PC-3 (cell line): ENCODE measurements at regions of chr6 and their contacts with region 1.

Region 1: DNA sequence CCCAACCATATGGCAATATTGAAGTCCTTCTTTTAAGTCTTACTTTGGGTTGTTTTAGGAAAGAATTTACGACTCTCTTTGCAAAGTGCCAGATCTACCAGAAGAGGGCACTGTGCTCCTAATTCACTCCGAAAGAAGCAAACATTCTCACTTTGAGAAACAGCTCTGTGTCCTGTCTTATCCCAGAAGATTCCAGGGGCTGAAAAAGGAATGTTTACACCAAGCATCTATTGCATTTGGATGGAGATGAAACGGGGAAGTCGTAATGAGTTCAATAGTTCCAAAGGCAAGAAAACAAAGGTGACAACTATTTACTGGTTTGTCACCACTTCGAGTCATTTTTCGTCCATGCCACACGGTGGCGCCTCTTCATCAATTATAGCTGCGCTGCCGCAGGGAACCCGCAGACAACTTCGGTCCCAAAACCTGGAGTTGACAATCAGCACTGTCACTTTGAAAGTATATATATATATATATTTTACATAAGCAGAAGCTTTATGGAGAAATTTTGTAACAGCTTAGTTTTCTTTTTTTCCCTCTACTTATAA is 121.6 kb downstream of the MOXD1 start:
- DNase-seq: peak; percentile 76
- ATAC-seq: peak; percentile 64
- H3K4me3 ChIP-seq: peak overlapping the region; percentile 68
- H3K27ac ChIP-seq: no peak overlapping the region
- H3K4me1 ChIP-seq: no peaks in the 10 kb centered on the region
- H3K27me3 ChIP-seq: no peaks in the 10 kb centered on the region
- CTCF ChIP-seq: peak; percentile 96

Region 2: GRCh38 chr6:131924881-131925474 is 354.7 kb before region 1 on chr6:
- CTCF ChIA-PET with region 1: interaction called, 3 read pairs
- POLR2A ChIA-PET with region 1: no interaction called
- intact Hi-C with region 1: loop called (anchors 5 kb)
- DNase-seq: peak; percentile 63
- ATAC-seq: peak; percentile 48
- H3K4me3 ChIP-seq: no peak overlapping the region
- H3K27ac ChIP-seq: no peak overlapping the region
- H3K4me1 ChIP-seq: peaks cover 4% of the 10 kb centered on the region; the same call in 1 of the 2 replicates
- H3K27me3 ChIP-seq: no peaks in the 10 kb centered on the region
- CTCF ChIP-seq: peak; percentile 74

Region 3: DNA sequence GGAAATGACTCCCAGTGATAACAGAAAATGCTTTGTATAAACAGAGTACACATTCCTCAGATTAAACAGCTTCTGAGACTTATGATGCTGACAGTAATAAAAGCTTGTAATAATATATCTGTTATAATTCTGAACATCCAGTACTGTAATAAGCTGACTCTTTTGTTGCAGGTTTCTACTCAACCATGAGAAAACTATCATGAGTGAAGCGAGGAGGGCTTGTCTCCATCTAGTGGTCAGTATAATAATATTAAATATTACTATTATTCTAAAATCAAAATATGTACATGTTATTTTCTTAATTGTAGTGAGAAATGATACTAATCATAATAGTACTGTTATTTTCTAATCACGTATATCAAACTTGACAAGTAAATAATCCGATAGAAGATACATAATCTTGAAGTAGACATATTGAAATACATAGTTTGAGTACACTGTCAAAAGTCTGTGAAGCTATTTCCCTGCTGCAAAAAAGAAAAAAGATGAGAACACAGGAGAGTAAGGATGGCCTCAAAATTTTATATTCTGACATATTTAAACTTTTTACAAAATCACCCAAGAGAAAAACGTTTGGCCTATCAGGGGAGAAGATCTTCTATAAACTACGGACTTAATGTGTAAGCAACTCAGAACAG is 61.5 kb before region 1 on chr6:
- CTCF ChIA-PET with region 1: no interaction called
- POLR2A ChIA-PET with region 1: no interaction called
- intact Hi-C with region 1: no loop called
- DNase-seq: peak; percentile 42
- ATAC-seq: no peak; the same call in 1 of the 2 replicates
- H3K4me3 ChIP-seq: no peak overlapping the region
- H3K27ac ChIP-seq: no peak overlapping the region
- H3K4me1 ChIP-seq: no peaks in the 10 kb centered on the region
- H3K27me3 ChIP-seq: no peaks in the 10 kb centered on the region
- CTCF ChIP-seq: peak; percentile 36

Region 4: GRCh38 chr6:132300323-132300949 is 20.8 kb after region 1 on chr6:
- CTCF ChIA-PET with region 1: interaction called, 19 read pairs
- POLR2A ChIA-PET with region 1: no interaction called
- intact Hi-C with region 1: loop called (anchors 1 kb)
- DNase-seq: peak; percentile 66
- ATAC-seq: peak; percentile 87
- H3K4me3 ChIP-seq: no peak overlapping the region
- H3K27ac ChIP-seq: no peak overlapping the region
- H3K4me1 ChIP-seq: no peaks in the 10 kb centered on the region
- H3K27me3 ChIP-seq: no peaks in the 10 kb centered on the region
- CTCF ChIP-seq: peak; percentile 70

Region 5: GRCh38 chr6:132391391-132392271 is 112.0 kb after region 1 on chr6:
- CTCF ChIA-PET with region 1: interaction called, 4 read pairs
- POLR2A ChIA-PET with region 1: no interaction called
- intact Hi-C with region 1: loop called (anchors 5 kb)
- DNase-seq: peak; percentile 26
- ATAC-seq: peak; percentile 51
- H3K4me3 ChIP-seq: no peak overlapping the region
- H3K27ac ChIP-seq: no peak overlapping the region
- H3K4me1 ChIP-seq: no peaks in the 10 kb centered on the region
- H3K27me3 ChIP-seq: no peaks in the 10 kb centered on the region
- CTCF ChIP-seq: no peak

Region 6: DNA sequence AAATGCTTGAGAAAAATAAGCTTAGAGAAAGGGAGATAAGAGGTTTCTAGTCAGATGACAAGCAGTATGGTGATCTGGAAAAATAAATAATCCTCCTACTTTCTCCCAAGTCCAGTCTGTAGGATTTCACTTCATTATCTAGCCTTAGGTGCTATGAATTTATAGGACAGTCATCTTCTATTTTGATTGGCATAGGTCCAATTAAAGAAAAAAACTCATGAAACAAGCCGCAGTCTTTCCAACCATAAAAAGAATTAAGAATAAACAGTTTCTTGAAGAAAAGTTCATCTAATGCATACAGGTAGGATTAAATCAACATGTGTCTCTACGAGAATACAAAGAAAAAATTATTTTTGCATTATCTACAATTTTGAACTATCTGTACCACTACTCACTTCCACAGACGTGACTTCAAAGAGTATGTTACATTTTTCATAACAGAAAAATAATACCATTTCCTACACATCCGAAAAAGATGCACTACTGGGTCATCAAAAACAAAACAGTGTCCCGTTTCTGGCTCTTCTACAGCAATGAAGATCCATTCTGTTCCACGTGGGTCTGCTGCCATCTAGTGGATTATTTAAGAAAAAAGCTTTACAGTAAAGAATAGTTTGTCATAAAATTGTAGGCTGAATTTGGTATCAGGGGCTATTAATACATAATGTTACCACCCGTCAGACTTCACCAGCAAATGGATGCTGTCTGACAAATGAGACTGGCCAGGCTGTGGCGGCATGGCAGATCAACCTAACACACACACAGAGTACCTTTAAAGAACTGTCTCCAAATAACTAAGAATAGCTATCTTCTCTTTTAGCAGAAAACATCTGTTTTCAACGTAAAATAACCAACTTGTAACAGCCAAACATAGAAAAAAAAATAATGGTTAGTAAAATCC is 204.4 kb after region 1 on chr6:
- CTCF ChIA-PET with region 1: interaction called, 8 read pairs
- POLR2A ChIA-PET with region 1: no interaction called
- intact Hi-C with region 1: loop called (anchors 1 kb)
- DNase-seq: peak; percentile 77
- ATAC-seq: peak; percentile 77
- H3K4me3 ChIP-seq: no peak overlapping the region
- H3K27ac ChIP-seq: no peak overlapping the region
- H3K4me1 ChIP-seq: peaks cover 3% of the 10 kb centered on the region; the same call in 1 of the 2 replicates
- H3K27me3 ChIP-seq: no peaks in the 10 kb centered on the region
- CTCF ChIP-seq: peak; percentile 77